ENCODE measurements at regions of chr14 and their contacts with region 1.

Region 1: GRCh38 chr14:81363746-81364378 is 36.3 kb downstream of the STON2 start:
- DNase-seq: no peak
- ATAC-seq: no peak
- H3K4me3 ChIP-seq: no peak overlapping the region
- H3K27ac ChIP-seq: no peak overlapping the region
- H3K4me1 ChIP-seq: no peaks in the 10 kb centered on the region
- H3K27me3 ChIP-seq: no peaks in the 10 kb centered on the region
- CTCF ChIP-seq: no peak

Region 2: GRCh38 chr14:81427348-81428058 is 63.6 kb after region 1 on chr14:
- intact Hi-C with region 1: loop called (anchors 5 kb)
- DNase-seq: no peak
- ATAC-seq: peak; percentile 63
- H3K4me3 ChIP-seq: no peak overlapping the region
- H3K27ac ChIP-seq: peak overlapping the region; percentile 30
- H3K4me1 ChIP-seq: peaks cover 11% of the 10 kb centered on the region
- H3K27me3 ChIP-seq: no peaks in the 10 kb centered on the region
- CTCF ChIP-seq: no peak